Astrocyte of the cerebellum (primary cell): ENCODE measurements at regions of chr17 and their contacts with region 1.

Region 1: DNA sequence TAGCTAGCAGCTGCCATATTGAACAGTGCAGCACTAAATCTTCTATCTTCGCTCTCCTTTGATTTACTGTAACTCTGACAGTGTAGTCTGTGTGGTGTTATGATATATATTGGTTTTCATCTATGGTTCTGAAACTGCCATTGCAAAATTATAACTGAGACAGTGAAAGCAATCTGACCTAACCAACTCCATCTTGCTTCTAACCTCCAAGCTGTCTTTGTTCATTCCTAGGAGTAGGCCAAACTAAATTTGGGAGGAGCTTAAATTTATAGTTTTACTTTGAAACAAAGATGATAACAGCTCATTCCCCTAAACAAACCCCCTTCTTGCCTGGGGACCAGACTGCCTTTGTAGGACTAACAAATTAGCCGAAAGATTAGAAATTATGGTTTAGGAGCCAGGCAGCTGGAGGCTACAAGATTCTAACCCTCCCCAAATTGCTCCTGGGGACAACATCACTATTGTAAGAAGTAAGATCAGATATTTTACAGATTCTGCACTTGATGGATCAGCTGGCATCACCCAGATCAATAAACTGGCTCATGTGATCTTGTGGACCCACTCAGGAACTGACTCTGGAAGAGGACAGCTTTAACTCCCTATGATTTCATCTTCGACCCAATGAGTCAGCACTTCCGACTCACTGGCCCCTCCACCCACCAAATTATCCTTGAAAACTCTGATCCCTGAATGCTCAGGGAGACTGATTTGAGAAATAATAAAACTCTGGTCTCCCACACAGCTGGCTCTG is 47.0 kb upstream of the FBXO47 start:
- DNase-seq: no peak
- H3K4me3 ChIP-seq: no peak overlapping the region
- CTCF ChIP-seq: no peak

Region 2: GRCh38 chr17:38970128-38970527 is 44.1 kb before region 1 on chr17:
- in situ Hi-C with region 1: loop called (anchors 5 kb)
- DNase-seq: no peak
- H3K4me3 ChIP-seq: no peak overlapping the region
- CTCF ChIP-seq: peak; percentile 5

Region 3: GRCh38 chr17:39123627-39124026 is 109.4 kb after region 1 on chr17:
- in situ Hi-C with region 1: loop called (anchors 10 kb)
- DNase-seq: no peak
- H3K4me3 ChIP-seq: no peak overlapping the region
- CTCF ChIP-seq: no peak